ENCODE measurements at regions of chr6 and their contacts with region 1.

Region 1: DNA sequence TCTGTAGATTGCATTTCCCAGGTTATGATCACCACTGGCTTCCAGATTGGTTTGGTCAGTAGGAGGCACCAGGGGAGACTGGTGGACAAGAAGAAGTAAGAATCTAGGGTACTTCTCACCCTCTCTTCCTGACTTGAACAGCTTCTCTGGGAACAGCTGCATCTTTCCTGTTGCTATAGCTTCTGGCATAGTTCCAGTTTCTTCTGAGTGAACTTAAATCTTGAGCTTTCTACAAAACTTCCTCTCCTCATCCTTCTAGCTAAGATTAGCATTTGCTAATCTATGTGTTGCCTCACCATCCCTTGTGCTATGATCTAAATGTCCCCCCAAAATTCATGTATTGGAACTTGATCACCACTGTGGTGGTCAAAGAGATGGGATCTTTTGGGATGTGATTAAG is 724.6 kb downstream of the UTRN start:
- DNase-seq: no peak
- ATAC-seq: no peak

Region 2: GRCh38 chr6:144637541-144637940 is 372.2 kb before region 1 on chr6:
- intact Hi-C with region 1: no loop called
- DNase-seq: no peak
- ATAC-seq: peak in 1 of 2 donors; percentile 34

Region 3: GRCh38 chr6:145372671-145373151 is 363.0 kb after region 1 on chr6:
- intact Hi-C with region 1: loop called in 1 of 2 experiments (anchors 5 kb)
- DNase-seq: peak; percentile 39
- ATAC-seq: peak; percentile 97